AG04450 (cell line): ENCODE measurements at regions of chr1 and their contacts with region 1.

Region 1: GRCh38 chr1:163071405-163072255 is 2.5 kb downstream of the RGS4 start:
- DNase-seq: peak; percentile 75
- H3K4me3 ChIP-seq: peak overlapping the region; percentile 54
- H3K27ac ChIP-seq: peak overlapping the region; percentile 54
- H3K27me3 ChIP-seq: no peaks in the 10 kb centered on the region
- CTCF ChIP-seq: peak; percentile 82

Region 2: GRCh38 chr1:162847839-162848453 is 223.7 kb before region 1 on chr1:
- CTCF ChIA-PET with region 1: interaction called, 118 read pairs
- POLR2A ChIA-PET with region 1: interaction called, 3 read pairs
- DNase-seq: peak; percentile 67
- H3K4me3 ChIP-seq: no peak overlapping the region
- H3K27ac ChIP-seq: no peak overlapping the region
- H3K27me3 ChIP-seq: no peaks in the 10 kb centered on the region
- CTCF ChIP-seq: peak; percentile 91

Region 3: GRCh38 chr1:162861101-162861500 is 210.5 kb before region 1 on chr1 and contains the start of gene CCDC190:
- CTCF ChIA-PET with region 1: interaction called, 22 read pairs
- POLR2A ChIA-PET with region 1: no interaction called
- DNase-seq: no peak
- H3K4me3 ChIP-seq: no peak within 1 kb of the TSS
- H3K27ac ChIP-seq: no peak within 1 kb of the TSS
- H3K27me3 ChIP-seq: no peaks in the 10 kb centered on the region
- CTCF ChIP-seq: no peak
- polyA plus RNA-seq, gene CCDC190: not detected in 2 replicates

Region 4: GRCh38 chr1:162878000-162878596 is 193.5 kb before region 1 on chr1:
- CTCF ChIA-PET with region 1: interaction called, 134 read pairs
- POLR2A ChIA-PET with region 1: interaction called, 7 read pairs
- DNase-seq: peak; percentile 38
- H3K4me3 ChIP-seq: no peak overlapping the region
- H3K27ac ChIP-seq: no peak overlapping the region
- H3K27me3 ChIP-seq: no peaks in the 10 kb centered on the region
- CTCF ChIP-seq: peak; percentile 84

Region 5: DNA sequence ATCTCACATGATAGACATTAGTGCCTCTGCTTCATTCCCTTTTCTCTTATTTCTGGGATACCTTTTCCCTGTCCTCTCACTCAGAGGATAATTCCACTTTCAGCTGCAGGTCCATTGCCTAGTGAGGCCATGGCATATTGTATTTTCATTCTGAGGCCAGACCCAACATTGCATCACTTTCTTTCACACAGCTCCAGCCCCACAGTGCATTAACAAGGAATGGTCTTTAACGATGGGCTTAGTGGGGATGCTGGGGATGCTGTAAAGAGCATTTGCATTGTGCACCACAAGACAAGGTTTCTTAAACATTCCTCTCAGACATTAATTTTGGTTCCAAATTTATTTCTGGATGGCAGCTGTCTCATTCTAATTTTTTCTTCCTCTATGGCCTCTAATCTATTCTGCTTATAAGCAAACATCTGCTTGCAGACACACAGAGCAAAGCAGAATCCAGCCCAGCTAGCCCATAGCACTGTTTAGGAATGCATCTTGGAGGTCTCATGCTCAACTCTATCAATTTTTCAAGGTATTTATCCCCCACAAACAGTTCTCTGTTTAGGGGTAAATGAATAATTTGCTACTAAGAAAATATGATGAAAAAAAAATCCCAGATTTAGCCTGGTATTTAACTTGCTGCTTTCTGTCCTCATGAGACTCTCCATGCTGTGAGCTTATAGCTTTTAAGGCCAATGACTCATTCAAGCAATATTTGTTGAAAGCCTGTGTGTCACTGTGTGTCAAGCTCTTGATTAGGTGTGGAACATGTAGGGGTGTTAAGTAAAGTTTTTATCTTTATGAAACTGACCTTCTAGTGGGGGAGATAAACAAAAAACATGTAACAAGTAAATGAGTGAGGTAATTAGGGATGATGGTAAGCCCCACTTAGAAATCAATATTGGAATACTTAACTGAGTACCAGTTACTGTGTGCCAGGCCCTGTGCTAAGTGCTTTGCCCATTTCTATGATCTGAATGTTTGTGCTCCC is 166.2 kb before region 1 on chr1:
- CTCF ChIA-PET with region 1: interaction called, 12 read pairs
- POLR2A ChIA-PET with region 1: interaction called, 3 read pairs
- DNase-seq: no peak
- H3K4me3 ChIP-seq: no peak overlapping the region
- H3K27ac ChIP-seq: no peak overlapping the region
- H3K27me3 ChIP-seq: no peaks in the 10 kb centered on the region
- CTCF ChIP-seq: no peak

Region 6: DNA sequence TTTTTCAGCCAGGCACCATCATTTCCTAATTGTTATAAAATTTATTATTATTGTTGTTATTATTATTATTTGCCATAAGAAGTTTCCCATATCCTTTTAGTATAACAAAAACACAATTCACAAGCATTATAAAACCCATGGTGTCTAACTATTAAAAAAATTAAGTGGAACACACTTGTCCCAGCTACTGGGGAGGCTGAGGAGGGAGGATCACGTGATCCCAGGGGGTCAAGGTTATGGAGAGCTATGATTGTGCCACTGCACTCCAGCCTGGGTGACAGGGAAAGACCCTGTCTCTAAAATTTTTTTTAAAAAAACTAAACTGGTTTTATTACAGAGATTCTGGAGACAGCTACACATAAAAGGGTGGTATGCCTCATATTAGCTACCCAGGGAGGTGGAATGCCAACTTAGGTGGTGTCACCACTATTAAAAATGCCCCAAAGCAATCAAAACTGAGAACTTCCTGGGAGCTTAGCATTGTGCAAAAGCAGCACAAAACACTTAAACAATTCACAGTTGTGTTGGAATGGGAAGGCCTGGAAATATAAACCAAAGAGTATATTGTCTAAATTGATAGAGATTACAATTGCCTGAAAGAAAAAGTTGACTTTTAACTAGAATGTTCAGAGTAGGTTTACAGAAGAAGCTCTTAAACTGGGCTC is 11.2 kb before region 1 on chr1:
- CTCF ChIA-PET with region 1: interaction called, 29 read pairs
- POLR2A ChIA-PET with region 1: interaction called, 3 read pairs
- DNase-seq: no peak
- H3K4me3 ChIP-seq: no peak overlapping the region
- H3K27ac ChIP-seq: no peak overlapping the region
- H3K27me3 ChIP-seq: no peaks in the 10 kb centered on the region
- CTCF ChIP-seq: no peak

Region 7: GRCh38 chr1:163174524-163175437 is 103.2 kb after region 1 on chr1:
- CTCF ChIA-PET with region 1: interaction called, 182 read pairs
- POLR2A ChIA-PET with region 1: interaction called, 3 read pairs
- DNase-seq: peak; percentile 29
- H3K4me3 ChIP-seq: no peak overlapping the region
- H3K27ac ChIP-seq: no peak overlapping the region
- H3K27me3 ChIP-seq: no peaks in the 10 kb centered on the region
- CTCF ChIP-seq: peak; percentile 94